AG04450 (cell line): ENCODE measurements at regions of chr5 and their contacts with region 1.

Region 1: DNA sequence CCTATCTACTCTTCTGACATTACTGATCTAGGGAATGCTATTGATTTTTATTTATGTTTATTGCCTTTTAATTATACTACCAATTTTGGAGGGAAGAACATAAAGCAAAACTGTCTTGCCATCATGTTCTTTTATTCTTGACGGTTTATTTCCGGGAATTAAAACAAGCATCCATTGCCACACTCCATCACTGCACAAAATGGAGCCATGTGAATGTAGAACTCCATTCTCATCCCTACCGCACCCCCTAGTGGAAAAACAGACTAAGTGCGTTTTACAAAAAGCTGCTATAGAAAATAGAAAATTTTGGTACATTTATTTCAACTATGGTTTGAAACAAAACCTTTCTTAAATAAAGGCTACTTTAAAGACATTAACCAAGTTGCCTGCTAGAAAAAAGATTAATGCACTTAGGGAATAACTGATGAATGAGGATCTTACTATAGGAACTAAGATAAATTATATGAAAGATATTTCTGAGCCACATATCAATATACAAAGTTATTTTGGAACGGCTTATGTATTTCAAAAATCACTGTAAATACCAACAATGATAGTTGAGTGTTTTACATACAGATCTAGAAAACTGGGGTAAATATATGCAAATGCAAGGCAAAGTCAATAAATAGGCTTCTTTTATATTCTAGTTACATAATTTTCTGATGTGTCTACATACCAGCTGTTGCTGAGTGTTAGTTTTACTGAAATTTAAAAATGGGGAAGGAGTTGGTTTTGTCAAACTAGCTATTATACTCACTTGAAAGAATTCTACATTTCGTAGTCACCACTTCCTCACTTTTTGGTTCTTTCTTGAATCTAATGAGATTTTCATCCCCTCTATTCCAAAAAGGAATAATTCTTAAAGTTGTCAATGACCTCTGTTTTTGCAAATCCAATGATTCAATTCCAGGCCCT is 26.5 kb downstream of the OXCT1 start:
- DNase-seq: peak; percentile 48
- H3K4me3 ChIP-seq: no peak overlapping the region
- H3K27ac ChIP-seq: no peak overlapping the region
- H3K27me3 ChIP-seq: no peaks in the 10 kb centered on the region
- CTCF ChIP-seq: peak; percentile 90

Region 2: DNA sequence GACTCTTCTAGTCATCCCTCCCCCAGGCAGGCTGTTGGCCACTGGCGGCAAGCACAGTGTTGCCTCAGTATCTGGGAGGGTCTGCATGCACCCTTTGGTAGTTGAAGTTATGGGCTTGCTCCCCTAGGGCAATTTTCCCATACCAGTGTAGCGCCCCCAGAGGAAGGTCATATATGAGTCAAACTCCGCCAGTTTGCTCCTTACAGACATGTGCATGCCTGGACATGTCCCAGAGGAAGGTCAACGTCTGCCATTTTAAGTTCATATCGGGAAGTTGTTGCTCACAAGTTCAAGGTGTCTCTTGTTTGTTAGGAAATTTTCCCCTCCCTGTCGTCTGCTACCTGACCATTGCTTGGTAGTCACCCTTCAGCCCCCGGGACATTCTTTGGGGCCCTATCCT is 721.3 kb before region 1 on chr5:
- CTCF ChIA-PET with region 1: interaction called, 14 read pairs
- POLR2A ChIA-PET with region 1: no interaction called
- DNase-seq: no peak
- H3K4me3 ChIP-seq: no peak overlapping the region
- H3K27ac ChIP-seq: no peak overlapping the region
- H3K27me3 ChIP-seq: no peaks in the 10 kb centered on the region
- CTCF ChIP-seq: no peak

Region 3: GRCh38 chr5:41457094-41457493 is 386.6 kb before region 1 on chr5:
- CTCF ChIA-PET with region 1: no interaction called
- POLR2A ChIA-PET with region 1: no interaction called
- DNase-seq: no peak
- H3K4me3 ChIP-seq: no peak overlapping the region
- H3K27ac ChIP-seq: no peak overlapping the region
- H3K27me3 ChIP-seq: no peaks in the 10 kb centered on the region
- CTCF ChIP-seq: no peak

Region 4: DNA sequence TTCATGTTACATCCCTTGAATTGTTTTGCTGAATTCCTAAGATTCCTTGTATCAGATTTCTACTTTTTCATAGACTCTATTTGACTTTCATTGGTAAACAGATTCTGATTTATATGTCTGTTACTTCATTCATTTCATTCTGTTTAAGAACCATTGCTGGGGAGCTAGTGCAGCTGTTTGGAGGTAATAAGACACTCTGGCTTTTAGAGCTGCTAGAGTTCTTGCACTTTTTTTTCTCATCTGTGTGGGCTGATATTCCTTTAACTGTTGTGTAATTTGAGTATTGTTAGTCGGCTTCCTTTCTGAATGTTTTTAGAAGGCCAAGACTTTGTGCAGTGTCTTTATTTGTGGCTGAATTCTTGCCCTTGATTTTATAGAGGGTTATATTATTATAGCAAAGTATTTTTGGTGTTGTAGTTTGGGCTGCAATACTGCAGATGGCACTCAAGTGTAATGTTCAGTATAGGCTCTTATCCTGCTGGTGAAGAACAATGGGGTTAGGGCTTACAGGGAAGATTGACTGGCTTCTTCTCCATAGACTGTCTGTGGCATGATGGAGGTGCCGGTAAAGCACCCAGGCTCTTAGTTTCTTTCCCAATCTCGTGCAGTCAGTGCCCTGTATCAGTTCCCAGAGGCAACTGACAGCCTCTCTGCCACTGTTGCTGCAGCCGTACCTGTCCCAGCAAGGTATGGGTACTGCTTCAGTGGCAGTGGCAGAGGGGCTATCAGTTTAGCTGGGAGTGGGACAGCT is 135.7 kb before region 1 on chr5:
- CTCF ChIA-PET with region 1: interaction called, 77 read pairs
- POLR2A ChIA-PET with region 1: no interaction called
- DNase-seq: peak; percentile 51
- H3K4me3 ChIP-seq: no peak overlapping the region
- H3K27ac ChIP-seq: no peak overlapping the region
- H3K27me3 ChIP-seq: no peaks in the 10 kb centered on the region
- CTCF ChIP-seq: peak; percentile 73

Region 5: GRCh38 chr5:41722359-41722950 is 121.3 kb before region 1 on chr5:
- CTCF ChIA-PET with region 1: interaction called, 16 read pairs
- POLR2A ChIA-PET with region 1: no interaction called
- DNase-seq: no peak
- H3K4me3 ChIP-seq: no peak overlapping the region
- H3K27ac ChIP-seq: no peak overlapping the region
- H3K27me3 ChIP-seq: no peaks in the 10 kb centered on the region
- CTCF ChIP-seq: peak; percentile 27

Region 6: DNA sequence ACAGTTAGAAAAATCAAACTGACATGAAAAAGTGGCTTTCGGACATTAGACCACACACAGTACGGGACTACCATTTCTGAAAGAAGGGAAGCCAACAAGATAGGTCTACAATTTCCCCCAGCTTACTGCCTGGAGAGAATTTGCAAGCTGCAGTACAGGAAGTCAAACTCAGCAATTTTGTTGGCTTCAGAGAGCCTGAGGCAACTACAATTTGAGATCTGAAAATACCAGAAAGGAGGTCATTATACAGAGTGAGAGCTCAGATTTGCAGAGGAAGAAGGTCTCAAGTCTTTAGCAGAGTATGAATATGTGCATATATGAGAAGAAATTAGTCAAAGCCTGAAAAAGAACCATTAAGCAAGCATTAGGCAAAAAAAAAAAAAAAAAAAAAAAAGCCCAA is 56.4 kb before region 1 on chr5:
- CTCF ChIA-PET with region 1: interaction called, 10 read pairs
- POLR2A ChIA-PET with region 1: no interaction called
- DNase-seq: no peak
- H3K4me3 ChIP-seq: no peak overlapping the region
- H3K27ac ChIP-seq: no peak overlapping the region
- H3K27me3 ChIP-seq: no peaks in the 10 kb centered on the region
- CTCF ChIP-seq: no peak

Region 7: DNA sequence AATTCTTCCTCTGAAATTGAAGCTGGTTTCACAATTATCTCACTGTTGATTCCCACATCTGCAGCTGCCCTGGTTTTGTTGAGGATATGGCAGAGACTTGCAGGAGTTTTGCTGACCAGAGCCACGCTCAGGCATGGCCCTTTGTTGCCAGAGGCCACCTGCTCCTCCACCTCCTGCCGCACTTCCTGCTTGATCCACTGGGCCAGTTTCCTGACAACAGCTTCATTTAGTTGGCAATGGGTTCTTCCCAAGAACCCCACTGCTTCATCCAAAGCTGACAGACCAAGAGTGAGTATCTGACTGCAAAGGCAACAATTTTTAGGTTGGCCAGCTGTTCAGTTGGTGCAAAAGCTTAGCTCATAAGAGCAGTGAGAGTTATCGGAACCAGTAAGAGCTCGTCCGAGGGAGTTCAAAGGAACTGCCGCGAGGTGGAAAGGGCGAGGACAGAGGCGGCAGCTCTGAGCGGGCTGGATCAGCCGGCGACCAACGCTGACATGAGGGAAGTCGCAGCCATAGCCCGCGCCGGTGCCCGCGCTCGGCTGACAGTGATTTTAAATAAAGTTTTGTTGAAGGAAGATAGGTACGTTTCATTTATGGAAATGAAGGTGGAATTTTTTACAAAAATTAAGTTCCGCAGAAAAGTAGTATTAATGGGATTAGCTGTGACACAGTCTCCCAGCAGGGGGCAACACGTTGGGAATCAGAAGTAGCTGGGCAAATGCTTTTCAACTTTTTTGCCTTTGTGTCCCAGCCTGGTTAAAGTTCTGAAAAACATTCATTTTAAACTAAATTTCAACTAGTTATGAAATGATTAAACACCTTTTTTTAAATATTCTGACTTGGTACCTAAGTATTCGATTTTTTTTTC is 124.4 kb after region 1 on chr5:
- CTCF ChIA-PET with region 1: no interaction called
- POLR2A ChIA-PET with region 1: no interaction called
- DNase-seq: no peak
- H3K4me3 ChIP-seq: no peak overlapping the region
- H3K27ac ChIP-seq: no peak overlapping the region
- H3K27me3 ChIP-seq: no peaks in the 10 kb centered on the region
- CTCF ChIP-seq: peak; percentile 24; the same call in 1 of the 2 replicates

Region 8: GRCh38 chr5:42057254-42057690 is 213.6 kb after region 1 on chr5:
- CTCF ChIA-PET with region 1: no interaction called
- POLR2A ChIA-PET with region 1: no interaction called
- DNase-seq: peak; percentile 0
- H3K4me3 ChIP-seq: no peak overlapping the region
- H3K27ac ChIP-seq: no peak overlapping the region
- H3K27me3 ChIP-seq: no peaks in the 10 kb centered on the region
- CTCF ChIP-seq: peak; percentile 71

Region 9: DNA sequence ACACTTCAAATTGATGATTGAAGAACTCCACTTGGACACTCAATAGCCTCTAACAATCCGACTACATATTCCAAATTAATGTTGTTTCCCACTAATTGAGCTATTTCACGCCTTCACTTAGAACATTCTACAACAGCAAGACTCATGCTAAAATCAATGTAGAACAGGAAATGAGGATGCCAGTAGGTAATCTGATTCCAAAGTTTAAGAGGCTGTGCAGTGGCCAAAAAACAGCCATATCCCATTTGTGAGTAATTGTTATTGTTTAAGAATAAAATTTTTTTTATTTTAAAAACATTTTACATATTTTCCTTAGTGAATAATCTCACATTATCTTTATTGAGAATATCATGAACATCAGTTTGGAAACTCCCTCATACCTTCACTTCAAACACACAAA is 543.9 kb after region 1 on chr5:
- CTCF ChIA-PET with region 1: no interaction called
- POLR2A ChIA-PET with region 1: no interaction called
- DNase-seq: no peak
- H3K4me3 ChIP-seq: no peak overlapping the region
- H3K27ac ChIP-seq: no peak overlapping the region
- H3K27me3 ChIP-seq: no peaks in the 10 kb centered on the region
- CTCF ChIP-seq: no peak